ENCODE measurements at regions of chr2 and their contacts with region 1.

Region 1: GRCh38 chr2:161063157-161063954 is 96.9 kb upstream of the TANK start:
- DNase-seq: peak; percentile 51
- ATAC-seq: peak; percentile 96
- H3K4me3 ChIP-seq: no peak overlapping the region
- H3K27ac ChIP-seq: no peak overlapping the region
- H3K4me1 ChIP-seq: no peaks in the 10 kb centered on the region; the same call in 1 of the 2 replicates
- H3K27me3 ChIP-seq: no peaks in the 10 kb centered on the region
- CTCF ChIP-seq: peak; percentile 88 to 91 (median 89)
- EP300 ChIP-seq: no peak
- POLR2A ChIP-seq: no peak
- RAD21 ChIP-seq: peak; percentile 84

Region 2: DNA sequence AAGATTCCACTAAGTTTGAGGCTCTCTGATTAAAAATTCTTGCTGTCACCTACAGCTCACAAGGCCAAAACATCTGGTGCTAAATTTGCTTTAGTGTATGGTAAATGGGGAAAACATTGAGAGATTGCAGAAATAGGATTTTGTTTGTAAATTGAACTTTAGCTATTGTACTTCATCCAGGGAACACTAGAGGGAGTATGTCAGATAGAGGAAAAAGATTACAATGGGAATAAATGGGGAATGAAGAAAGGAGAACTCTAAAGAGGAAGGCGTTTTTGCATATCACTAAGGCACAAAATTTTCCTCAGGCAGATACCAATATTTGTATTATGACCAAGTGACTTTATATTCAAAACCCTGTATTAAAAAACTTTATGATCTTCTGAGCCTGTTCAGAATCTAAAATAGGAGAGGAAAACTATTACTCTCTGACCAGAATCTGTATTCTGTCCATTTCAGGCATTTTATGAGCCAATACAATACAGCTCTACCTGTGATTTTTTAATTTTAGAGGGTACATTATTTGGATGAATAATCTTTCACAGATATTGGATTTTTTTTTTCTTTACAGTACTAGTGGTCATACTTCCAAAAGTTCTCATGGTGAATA is 811.0 kb before region 1 on chr2:
- CTCF ChIA-PET with region 1: interaction called, 24 read pairs
- POLR2A ChIA-PET with region 1: no interaction called
- RAD21 ChIA-PET with region 1: interaction called, 3 read pairs
- SMC1A ChIA-PET with region 1: no interaction called
- in situ Hi-C with region 1: no loop called
- intact Hi-C with region 1: no loop called
- DNase-seq: no peak
- ATAC-seq: no peak
- H3K4me3 ChIP-seq: no peak overlapping the region
- H3K27ac ChIP-seq: no peak overlapping the region
- H3K4me1 ChIP-seq: no peaks in the 10 kb centered on the region
- H3K27me3 ChIP-seq: no peaks in the 10 kb centered on the region; a peak in 3 of 4 replicates
- CTCF ChIP-seq: peak; percentile 55 to 64 (median 63)
- EP300 ChIP-seq: no peak
- POLR2A ChIP-seq: no peak
- RAD21 ChIP-seq: peak; percentile 44

Region 3: GRCh38 chr2:160596441-160596840 is 466.9 kb before region 1 on chr2:
- CTCF ChIA-PET with region 1: no interaction called
- POLR2A ChIA-PET with region 1: no interaction called
- RAD21 ChIA-PET with region 1: no interaction called
- SMC1A ChIA-PET with region 1: no interaction called
- in situ Hi-C with region 1: no loop called
- intact Hi-C with region 1: no loop called
- DNase-seq: no peak
- ATAC-seq: no peak
- H3K4me3 ChIP-seq: no peak overlapping the region
- H3K27ac ChIP-seq: no peak overlapping the region
- H3K4me1 ChIP-seq: no peaks in the 10 kb centered on the region
- H3K27me3 ChIP-seq: no peaks in the 10 kb centered on the region
- CTCF ChIP-seq: no peak
- EP300 ChIP-seq: no peak
- POLR2A ChIP-seq: no peak
- RAD21 ChIP-seq: no peak

Region 4: GRCh38 chr2:160970052-160970965 is 93.0 kb before region 1 on chr2:
- CTCF ChIA-PET with region 1: interaction called, 15 read pairs
- POLR2A ChIA-PET with region 1: no interaction called
- RAD21 ChIA-PET with region 1: interaction called, 5 read pairs
- SMC1A ChIA-PET with region 1: no interaction called
- in situ Hi-C with region 1: no loop called
- intact Hi-C with region 1: no loop called
- DNase-seq: no peak
- ATAC-seq: 0 out of 3 replicates have a peak, but pooled peaks have one; percentile 20
- H3K4me3 ChIP-seq: no peak overlapping the region
- H3K27ac ChIP-seq: no peak overlapping the region
- H3K4me1 ChIP-seq: no peaks in the 10 kb centered on the region
- H3K27me3 ChIP-seq: peaks cover 0 to 2% of the 10 kb centered on the region in 2 experiments; a peak in 2 of 4 replicates
- CTCF ChIP-seq: peak; percentile 36 to 50 (median 37); a peak in 4 of 6 replicates
- EP300 ChIP-seq: no peak
- POLR2A ChIP-seq: no peak
- RAD21 ChIP-seq: peak; percentile 58

Region 5: GRCh38 chr2:161077367-161078210 is 14.2 kb after region 1 on chr2:
- CTCF ChIA-PET with region 1: interaction called, 62 read pairs
- POLR2A ChIA-PET with region 1: interaction called, 4 read pairs
- RAD21 ChIA-PET with region 1: interaction called, 6 read pairs
- SMC1A ChIA-PET with region 1: interaction called, 22 read pairs
- in situ Hi-C with region 1: no loop called
- intact Hi-C with region 1: no loop called
- DNase-seq: peak; percentile 81
- ATAC-seq: peak; percentile 90
- H3K4me3 ChIP-seq: no peak overlapping the region
- H3K27ac ChIP-seq: peak overlapping the region; percentile 71
- H3K4me1 ChIP-seq: peaks cover 20% of the 10 kb centered on the region
- H3K27me3 ChIP-seq: no peaks in the 10 kb centered on the region
- CTCF ChIP-seq: no peak
- EP300 ChIP-seq: peak; percentile 70 to 74
- POLR2A ChIP-seq: no peak
- RAD21 ChIP-seq: 0 out of 2 replicates have a peak, but pooled peaks have one; percentile 5

Region 6: DNA sequence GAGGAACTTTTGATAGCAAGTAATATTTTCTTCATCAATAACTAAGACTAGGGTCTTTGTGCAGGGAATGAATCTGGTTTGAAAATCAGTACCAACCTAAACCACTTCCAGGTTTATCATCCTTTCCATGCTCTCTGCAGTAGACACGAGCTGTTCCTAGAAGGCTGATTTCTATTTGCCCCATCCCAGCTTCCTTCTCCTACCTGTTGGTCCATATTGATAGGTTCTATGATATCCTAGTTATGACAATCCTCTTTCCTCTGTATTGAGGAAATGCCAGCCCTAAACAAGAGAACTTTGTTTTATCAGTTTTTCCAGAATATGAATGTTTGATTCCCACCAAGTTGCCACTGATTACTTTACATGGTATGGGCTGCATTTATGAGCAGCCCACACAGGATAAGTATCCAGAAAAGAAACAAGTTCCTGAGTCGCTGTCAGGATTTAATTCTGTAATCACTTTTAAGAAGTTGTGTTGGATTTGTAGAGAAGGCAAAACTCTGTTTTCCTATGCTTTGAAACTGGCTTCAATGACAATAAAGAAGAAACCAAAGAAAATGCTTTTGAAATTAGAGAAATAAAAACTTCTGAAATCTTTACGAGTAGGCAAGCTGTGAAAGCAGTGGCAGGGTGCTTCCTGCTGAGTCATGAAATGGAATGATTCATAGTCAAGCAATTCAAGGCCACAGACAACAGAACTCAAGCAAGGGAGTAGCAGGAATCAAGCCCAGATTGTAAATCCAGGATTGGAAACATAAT is 59.6 kb after region 1 on chr2:
- CTCF ChIA-PET with region 1: interaction called, 42 read pairs
- POLR2A ChIA-PET with region 1: no interaction called
- RAD21 ChIA-PET with region 1: interaction called, 11 read pairs
- SMC1A ChIA-PET with region 1: interaction called, 9 read pairs
- in situ Hi-C with region 1: no loop called
- intact Hi-C with region 1: no loop called
- DNase-seq: no peak
- ATAC-seq: peak; percentile 81
- H3K4me3 ChIP-seq: no peak overlapping the region
- H3K27ac ChIP-seq: no peak overlapping the region; the same call in 1 of the 2 replicates
- H3K4me1 ChIP-seq: no peaks in the 10 kb centered on the region
- H3K27me3 ChIP-seq: no peaks in the 10 kb centered on the region
- CTCF ChIP-seq: no peak
- EP300 ChIP-seq: no peak
- POLR2A ChIP-seq: no peak
- RAD21 ChIP-seq: no peak

Region 7: GRCh38 chr2:161238560-161239325 is 175.4 kb after region 1 on chr2:
- CTCF ChIA-PET with region 1: interaction called, 11 read pairs
- POLR2A ChIA-PET with region 1: no interaction called
- RAD21 ChIA-PET with region 1: interaction called, 6 read pairs
- SMC1A ChIA-PET with region 1: no interaction called
- in situ Hi-C with region 1: no loop called
- intact Hi-C with region 1: no loop called
- DNase-seq: no peak
- ATAC-seq: peak; percentile 44
- H3K4me3 ChIP-seq: peak overlapping the region; percentile 76
- H3K27ac ChIP-seq: peak overlapping the region; percentile 31
- H3K4me1 ChIP-seq: peaks cover 20% of the 10 kb centered on the region
- H3K27me3 ChIP-seq: no peaks in the 10 kb centered on the region
- CTCF ChIP-seq: no peak
- EP300 ChIP-seq: no peak
- POLR2A ChIP-seq: 0 out of 2 replicates have a peak, but pooled peaks have one; percentile 29
- RAD21 ChIP-seq: no peak